GM10248 (cell line): ENCODE measurements at regions of chr14 and their contacts with region 1.

Region 1: GRCh38 chr14:39396448-39396847 is 35.8 kb downstream of the FBXO33 start:
- DNase-seq: no peak
- CTCF ChIP-seq: no peak

Region 2: GRCh38 chr14:39291701-39292100 is 104.7 kb before region 1 on chr14:
- CTCF ChIA-PET with region 1: no interaction called
- POLR2A ChIA-PET with region 1: no interaction called
- DNase-seq: no peak
- CTCF ChIP-seq: no peak

Region 3: DNA sequence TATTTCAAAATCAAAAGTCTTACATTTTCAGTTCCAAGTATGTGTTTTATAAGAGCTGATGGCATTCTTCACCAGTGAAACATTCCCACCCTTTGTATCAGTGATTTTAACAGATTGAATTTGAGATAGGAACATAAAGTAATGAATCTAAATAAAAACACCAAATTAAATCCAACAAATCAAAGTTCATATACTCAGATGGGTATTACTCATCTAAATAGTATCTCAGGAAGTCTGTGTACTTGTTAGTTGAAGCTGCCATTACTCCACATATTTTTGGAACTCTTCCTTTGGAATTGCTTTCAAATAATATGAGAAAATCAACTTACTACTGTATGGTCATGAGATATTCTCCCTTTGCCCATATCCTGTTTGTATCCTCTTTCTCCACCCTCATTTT is 73.6 kb before region 1 on chr14:
- CTCF ChIA-PET with region 1: no interaction called
- POLR2A ChIA-PET with region 1: no interaction called
- DNase-seq: no peak
- CTCF ChIP-seq: no peak

Region 4: DNA sequence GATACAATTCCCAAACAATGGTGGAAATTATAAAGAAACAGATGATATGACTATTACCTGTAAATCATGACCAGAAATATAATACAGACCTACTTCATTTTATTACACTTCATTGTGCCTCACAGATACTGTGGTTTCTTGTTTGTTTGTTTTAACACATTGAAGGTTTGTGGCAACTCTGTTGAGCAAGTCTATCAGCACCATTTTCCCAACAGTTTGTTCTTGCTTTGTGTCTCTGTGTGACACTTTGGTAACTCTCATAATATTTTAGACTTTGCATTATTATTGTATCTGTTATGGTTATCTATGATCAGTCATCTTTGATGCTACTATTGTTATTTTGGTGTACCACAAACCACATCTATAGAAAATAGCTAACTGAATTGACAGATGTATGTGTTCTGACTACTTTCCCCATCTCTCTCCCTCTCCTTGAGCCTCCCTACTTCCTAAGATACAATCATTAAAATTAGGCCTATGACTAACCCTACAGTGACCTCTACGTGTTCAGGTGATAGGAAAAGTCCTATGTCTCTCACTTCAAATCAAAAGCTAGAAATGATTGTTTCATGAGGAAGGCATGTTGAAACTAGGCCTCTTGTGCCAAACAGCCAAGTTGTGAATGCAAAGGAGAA is 13.3 kb before region 1 on chr14:
- CTCF ChIA-PET with region 1: interaction called, 19 read pairs
- POLR2A ChIA-PET with region 1: no interaction called
- DNase-seq: no peak
- CTCF ChIP-seq: no peak

Region 5: GRCh38 chr14:39426605-39427004 is 30.2 kb after region 1 on chr14:
- CTCF ChIA-PET with region 1: interaction called, 11 read pairs
- POLR2A ChIA-PET with region 1: no interaction called
- DNase-seq: no peak
- CTCF ChIP-seq: peak; percentile 12

Region 6: GRCh38 chr14:39568809-39569538 is 172.5 kb after region 1 on chr14:
- CTCF ChIA-PET with region 1: no interaction called
- POLR2A ChIA-PET with region 1: no interaction called
- DNase-seq: no peak
- CTCF ChIP-seq: no peak